GM13976 (cell line): ENCODE measurements at regions of chr11 and their contacts with region 1.

Region 1: GRCh38 chr11:11966826-11967668 is 41.4 kb downstream of the DKK3 start:
- DNase-seq: peak; percentile 88
- CTCF ChIP-seq: peak; percentile 83

Region 2: DNA sequence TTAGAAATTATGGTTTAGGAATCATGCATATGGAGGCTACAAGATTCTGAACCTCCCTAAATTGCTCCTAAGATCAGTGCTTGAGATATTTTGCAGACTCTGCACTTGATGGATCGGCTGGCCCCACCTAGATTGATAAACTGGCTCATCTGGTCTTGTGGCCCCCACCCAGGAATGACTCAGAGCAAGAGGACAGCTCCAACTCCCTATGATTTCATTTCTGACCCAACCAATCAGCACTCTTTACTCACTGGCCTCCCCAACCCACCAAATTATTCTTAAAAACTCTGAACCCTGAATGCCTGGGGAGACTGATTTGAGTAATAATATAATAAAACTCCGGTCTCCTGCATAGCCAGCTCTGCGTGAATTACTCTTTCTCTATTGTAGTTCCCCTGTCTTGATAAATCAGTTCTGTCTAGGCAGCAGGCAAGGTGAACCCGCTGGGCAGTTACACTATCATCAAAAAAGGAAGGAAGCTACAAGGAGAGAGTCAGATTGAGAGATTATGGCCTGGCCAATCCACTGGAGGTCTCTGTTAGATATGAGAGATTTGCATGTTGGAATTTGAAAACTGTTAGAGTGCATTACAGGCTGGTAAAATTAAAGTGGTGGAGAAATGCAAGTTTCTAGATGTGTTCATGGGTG is 859.8 kb before region 1 on chr11:
- in situ Hi-C with region 1: no loop called
- DNase-seq: no peak
- CTCF ChIP-seq: no peak

Region 3: GRCh38 chr11:11584446-11584810 is 382.6 kb before region 1 on chr11:
- in situ Hi-C with region 1: no loop called
- DNase-seq: peak; percentile 3
- CTCF ChIP-seq: no peak

Region 4: GRCh38 chr11:11787305-11788062 is 179.6 kb before region 1 on chr11:
- in situ Hi-C with region 1: no loop called
- DNase-seq: peak; percentile 53
- CTCF ChIP-seq: peak; percentile 83

Region 5: DNA sequence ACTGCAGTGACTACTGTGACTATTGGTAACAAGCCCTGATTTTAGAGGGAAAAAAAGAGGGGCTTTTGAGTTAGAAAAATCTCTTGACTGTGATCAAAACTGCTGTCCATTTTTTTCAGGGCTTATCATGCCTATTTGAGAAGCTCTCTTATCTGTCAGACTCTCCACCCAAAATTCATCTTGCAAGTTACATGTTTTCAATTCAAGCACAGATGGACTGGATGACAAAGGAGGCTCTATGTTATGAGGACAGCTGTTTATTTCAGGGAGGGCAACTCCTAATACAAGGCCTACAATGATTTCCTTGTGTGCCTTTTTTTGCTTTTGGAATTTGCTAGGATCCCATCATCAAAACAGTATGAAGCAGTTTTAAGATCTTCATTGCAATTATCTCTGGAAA is 160.5 kb before region 1 on chr11:
- in situ Hi-C with region 1: loop called (anchors 10 kb)
- DNase-seq: no peak
- CTCF ChIP-seq: no peak